Kidney (tissue), 22 donors: ENCODE measurements at regions of chr7 and their contacts with region 1.

Region 1: GRCh38 chr7:106009403-106010226 is 46.6 kb downstream of the CDHR3 start:
- DNase-seq: peak; percentile 93 to 97 (median 95)
- H3K4me3 ChIP-seq: no peak overlapping the region
- H3K27ac ChIP-seq: peak overlapping the region in 1 of 2 donors; percentile 6
- H3K4me1 ChIP-seq: peaks cover 8 to 23% (median 18%) of the 10 kb centered on the region in 3 donors
- H3K27me3 ChIP-seq: no peaks in the 10 kb centered on the region
- CTCF ChIP-seq: peak; percentile 89

Region 2: GRCh38 chr7:105759670-105760550 is 249.7 kb before region 1 on chr7:
- intact Hi-C with region 1: loop called (anchors 5 kb)
- DNase-seq: peak in 3 of 5 donors; percentile 35 to 68 (median 52)
- H3K4me3 ChIP-seq: no peak overlapping the region
- H3K27ac ChIP-seq: no peak overlapping the region
- H3K4me1 ChIP-seq: no peaks in the 10 kb centered on the region
- H3K27me3 ChIP-seq: no peaks in the 10 kb centered on the region
- CTCF ChIP-seq: peak; percentile 44